Activated naive CD4-positive, alpha-beta T cell treated with anti-CD3 and anti-CD28 coated beads for 36 hours (primary cell): ENCODE measurements at regions of chr19 and their contacts with region 1.

Region 1: GRCh38 chr19:17215125-17215971 is at the start of gene USE1:
- DNase-seq: peak; percentile 93
- H3K4me3 Mint-ChIP-seq: peak within 1 kb of the TSS; percentile 85
- H3K27ac Mint-ChIP-seq: peak within 1 kb of the TSS; percentile 97
- H3K4me1 Mint-ChIP-seq: peaks cover 10% of the 10 kb centered on the region
- H3K27me3 Mint-ChIP-seq: no peaks in the 10 kb centered on the region
- total RNA-seq, gene USE1: 24.7 to 25.3 TPM

Region 2: GRCh38 chr19:17170538-17171297 is 44.6 kb before region 1 on chr19:
- CTCF ChIA-PET with region 1: no interaction called
- intact Hi-C with region 1: loop called (anchors 1 kb)
- DNase-seq: peak; percentile 76
- H3K4me3 Mint-ChIP-seq: no peak overlapping the region
- H3K27ac Mint-ChIP-seq: peak overlapping the region; percentile 87
- H3K4me1 Mint-ChIP-seq: peaks cover 18% of the 10 kb centered on the region
- H3K27me3 Mint-ChIP-seq: no peaks in the 10 kb centered on the region

Region 3: DNA sequence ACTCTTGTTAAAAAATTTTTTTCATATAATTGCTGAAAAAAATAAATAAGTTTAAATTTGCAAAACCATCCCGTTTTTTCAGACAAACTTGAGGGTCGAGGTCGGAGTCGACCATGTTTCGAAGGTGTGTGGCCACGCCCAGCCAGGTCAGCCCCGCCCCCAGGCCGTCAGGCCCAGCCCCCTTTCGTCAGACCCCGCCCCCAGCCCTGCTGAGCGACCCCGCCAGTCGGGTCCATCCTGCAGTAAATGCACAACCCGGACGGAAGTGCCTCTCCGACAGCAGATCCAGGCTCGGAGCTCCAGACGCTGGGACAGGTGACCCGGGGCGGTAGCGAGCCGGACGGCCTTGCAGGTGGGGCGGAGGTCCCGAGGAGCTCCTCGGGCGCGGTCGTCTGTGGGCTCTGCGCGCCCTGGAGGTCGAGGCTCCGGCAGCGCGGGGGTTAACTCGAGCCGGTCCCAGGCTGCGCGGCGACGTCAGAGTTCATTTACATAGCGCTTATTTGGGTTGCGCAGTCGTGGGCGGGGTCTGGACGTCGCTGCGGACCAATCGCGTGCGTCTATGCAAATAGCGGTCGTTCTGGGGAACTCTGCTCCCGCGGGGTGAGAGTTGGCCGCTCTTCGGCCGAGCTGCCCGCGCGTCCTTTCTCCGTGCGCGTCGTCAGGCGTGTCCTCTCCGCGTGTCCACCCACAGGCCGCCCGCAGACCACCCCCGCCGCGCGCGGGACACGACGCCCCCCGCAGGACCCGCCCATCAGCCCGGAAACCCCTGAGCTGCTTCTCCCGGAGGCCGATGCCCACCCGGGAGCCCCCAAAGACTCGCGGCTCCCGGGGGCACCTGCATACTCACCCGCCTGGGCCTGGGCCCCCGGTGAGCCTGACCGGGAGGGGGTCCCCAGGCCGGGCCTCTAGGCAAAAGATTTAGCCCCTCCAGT is 10.9 kb after region 1 on chr19 and contains the start of gene OCEL1:
- CTCF ChIA-PET with region 1: interaction called, 4 read pairs
- intact Hi-C with region 1: loop called (anchors 1 kb)
- DNase-seq: peak; percentile 98
- H3K4me3 Mint-ChIP-seq: peak within 1 kb of the TSS; percentile 83
- H3K27ac Mint-ChIP-seq: peak within 1 kb of the TSS; percentile 90
- H3K4me1 Mint-ChIP-seq: peaks cover 5% of the 10 kb centered on the region
- H3K27me3 Mint-ChIP-seq: no peaks in the 10 kb centered on the region
- total RNA-seq, gene OCEL1: 8.7 to 9.3 TPM